ENCODE measurements at regions of chr16 and their contacts with region 1.

Region 1: DNA sequence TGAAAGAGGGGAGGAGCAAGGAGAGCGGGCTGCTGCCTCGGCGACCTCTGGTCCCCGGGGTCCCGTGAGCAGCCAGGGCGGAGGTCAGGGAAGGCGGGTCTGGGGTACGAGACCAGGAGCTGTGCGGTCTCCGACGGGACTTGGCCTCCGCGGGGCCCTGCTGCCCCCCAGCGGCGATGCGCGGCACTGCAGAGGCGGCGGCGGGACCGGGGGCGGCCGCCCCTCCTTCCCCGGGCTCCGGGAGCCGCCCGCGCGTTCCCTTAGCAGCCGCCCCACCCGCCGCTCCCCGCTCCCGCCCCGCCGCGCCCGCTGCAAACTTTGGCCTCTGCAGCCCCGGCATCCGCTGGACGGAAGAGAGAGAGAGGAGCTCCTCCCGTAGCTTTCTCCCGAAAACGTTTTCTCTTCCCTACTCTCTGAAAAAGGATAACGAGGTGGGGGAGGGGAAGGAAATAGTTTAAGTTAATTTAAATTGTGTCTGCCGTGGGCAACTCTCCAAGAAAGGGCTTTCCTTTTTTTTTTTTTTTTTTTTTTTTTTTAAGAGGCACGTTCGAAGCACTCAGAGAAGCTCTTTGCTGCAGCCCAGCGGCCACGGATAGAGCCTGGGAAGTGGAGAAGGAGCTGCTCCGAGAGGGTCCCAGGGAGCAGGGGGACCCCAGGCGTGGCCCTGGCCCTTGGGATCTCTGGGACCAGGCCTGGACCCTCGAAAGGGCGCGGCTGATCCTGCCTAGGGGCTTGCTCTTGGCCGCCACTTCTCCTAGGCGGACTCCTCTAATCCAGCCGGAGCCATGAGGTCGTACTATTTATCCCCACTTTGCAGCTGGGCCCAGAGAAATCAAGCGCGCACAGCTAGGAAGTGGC is 43.2 kb downstream of the C16orf82 start:
- DNase-seq: peak; percentile 82 to 88
- ATAC-seq: peak; percentile 86 to 95 (median 94)
- H3K4me3 ChIP-seq: peak overlapping the region in 9 of 10 donors; percentile 16 to 45 (median 32)
- H3K27ac ChIP-seq: peak overlapping the region; percentile 26 to 71 (median 58)
- H3K4me1 ChIP-seq: peaks cover 0 to 12% (median 8%) of the 10 kb centered on the region in 9 donors
- H3K27me3 ChIP-seq: peaks cover 0 to 42% (median 11%) of the 10 kb centered on the region in 7 donors
- CTCF ChIP-seq: peak; percentile 81 to 99 (median 92)

Region 2: DNA sequence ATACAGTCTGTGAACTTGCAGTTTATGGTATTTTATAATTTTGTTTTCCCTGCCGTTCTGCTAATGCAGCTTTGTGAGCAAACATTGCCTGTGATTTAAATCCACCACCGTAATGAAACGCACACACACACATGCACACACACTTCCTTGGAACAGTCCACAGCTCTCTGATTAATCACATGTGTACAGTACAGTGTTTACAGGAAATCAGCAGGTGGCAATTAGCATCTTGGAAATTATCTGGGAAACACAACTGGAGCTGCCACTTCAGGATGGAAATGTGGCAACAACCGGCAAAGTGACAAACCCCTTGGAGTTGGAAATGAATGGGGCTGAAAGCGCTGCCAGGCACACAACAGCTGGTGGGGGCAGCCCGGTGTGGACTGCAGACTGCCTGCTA is 1839.3 kb before region 1 on chr16:
- intact Hi-C with region 1: loop called in 1 of 10 experiments (anchors 10 kb)
- DNase-seq: no peak
- ATAC-seq: no peak
- H3K4me3 ChIP-seq: no peak overlapping the region
- H3K27ac ChIP-seq: no peak overlapping the region
- H3K4me1 ChIP-seq: no peaks in the 10 kb centered on the region
- H3K27me3 ChIP-seq: no peaks in the 10 kb centered on the region
- CTCF ChIP-seq: no peak

Region 3: GRCh38 chr16:25289466-25289865 is 1820.4 kb before region 1 on chr16:
- intact Hi-C with region 1: loop called in 1 of 10 experiments (anchors 10 kb)
- DNase-seq: no peak
- ATAC-seq: no peak
- H3K4me3 ChIP-seq: no peak overlapping the region
- H3K27ac ChIP-seq: no peak overlapping the region
- H3K4me1 ChIP-seq: no peaks in the 10 kb centered on the region
- H3K27me3 ChIP-seq: no peaks in the 10 kb centered on the region
- CTCF ChIP-seq: no peak

Region 4: GRCh38 chr16:25823891-25824290 is 1286.0 kb before region 1 on chr16:
- intact Hi-C with region 1: loop called in 1 of 10 experiments (anchors 10 kb)
- DNase-seq: no peak
- ATAC-seq: no peak
- H3K4me3 ChIP-seq: no peak overlapping the region
- H3K27ac ChIP-seq: no peak overlapping the region
- H3K4me1 ChIP-seq: no peaks in the 10 kb centered on the region
- H3K27me3 ChIP-seq: peaks cover 0 to 11% (median 2%) of the 10 kb centered on the region in 7 donors
- CTCF ChIP-seq: no peak

Measured in heart right ventricle (tissue), 16 donors.